ENCODE measurements at regions of chr15 and their contacts with region 1.

Region 1: GRCh38 chr15:45790325-45790943 is 155.6 kb downstream of the SQOR start:
- DNase-seq: peak; percentile 56
- H3K4me3 Mint-ChIP-seq: no peak overlapping the region
- H3K27ac Mint-ChIP-seq: no peak overlapping the region
- H3K4me1 Mint-ChIP-seq: no peaks in the 10 kb centered on the region
- H3K27me3 Mint-ChIP-seq: peaks cover 54% of the 10 kb centered on the region
- CTCF ChIP-seq: peak; percentile 47

Region 2: GRCh38 chr15:45714590-45715488 is 75.6 kb before region 1 on chr15:
- CTCF ChIA-PET with region 1: interaction called, 6 read pairs
- intact Hi-C with region 1: loop called (anchors 1 kb)
- DNase-seq: peak; percentile 67
- H3K4me3 Mint-ChIP-seq: peak overlapping the region; percentile 17
- H3K27ac Mint-ChIP-seq: no peak overlapping the region
- H3K4me1 Mint-ChIP-seq: no peaks in the 10 kb centered on the region
- H3K27me3 Mint-ChIP-seq: peaks cover 34% of the 10 kb centered on the region
- CTCF ChIP-seq: peak; percentile 50

Region 3: DNA sequence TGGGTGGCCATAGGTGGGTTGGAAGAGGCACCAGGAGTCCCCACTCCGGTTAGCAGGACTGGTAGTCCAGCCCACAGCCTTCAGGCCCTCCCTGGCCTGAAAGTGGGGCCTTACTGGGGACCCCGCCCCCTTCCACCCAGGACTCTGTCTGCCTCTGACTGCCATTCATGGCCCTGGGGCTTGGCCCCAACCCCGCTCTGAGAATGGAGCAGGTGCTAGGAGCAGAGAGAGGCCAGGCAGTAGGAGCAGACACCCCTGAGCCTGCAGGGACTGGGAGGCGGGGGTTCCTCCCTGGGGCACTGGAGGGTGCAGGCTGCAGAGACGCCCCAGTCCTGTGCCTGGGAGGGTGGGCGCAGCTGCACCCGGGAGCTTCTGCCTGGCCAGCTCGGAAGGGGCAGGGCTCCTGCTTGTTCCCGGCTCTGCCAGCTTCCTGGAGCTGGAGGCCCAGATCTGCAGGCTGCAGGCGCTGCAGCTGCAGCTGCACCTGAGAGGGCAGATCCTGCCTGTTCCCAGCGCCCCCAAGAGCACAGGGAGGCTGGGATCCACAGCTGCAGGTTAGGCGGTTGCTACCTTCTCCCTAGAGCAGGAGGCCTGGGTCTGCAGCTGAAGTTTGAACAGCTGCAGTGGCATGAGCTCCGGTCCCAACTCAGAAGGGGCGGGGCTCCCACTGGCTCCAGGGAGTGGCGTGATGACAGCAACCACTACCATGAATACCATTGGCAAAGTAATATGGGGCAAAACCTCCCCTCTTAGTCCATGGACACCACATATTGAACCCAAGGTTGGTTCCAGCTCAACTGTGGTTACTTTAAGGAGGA is 39.1 kb after region 1 on chr15:
- CTCF ChIA-PET with region 1: no interaction called
- intact Hi-C with region 1: no loop called
- DNase-seq: no peak
- H3K4me3 Mint-ChIP-seq: no peak overlapping the region
- H3K27ac Mint-ChIP-seq: no peak overlapping the region
- H3K4me1 Mint-ChIP-seq: no peaks in the 10 kb centered on the region
- H3K27me3 Mint-ChIP-seq: peaks cover 30% of the 10 kb centered on the region
- CTCF ChIP-seq: no peak

Region 4: GRCh38 chr15:47688573-47689086 is 1898.2 kb after region 1 on chr15:
- CTCF ChIA-PET with region 1: interaction called, 13 read pairs
- intact Hi-C with region 1: no loop called
- DNase-seq: no peak
- H3K4me3 Mint-ChIP-seq: no peak overlapping the region
- H3K27ac Mint-ChIP-seq: no peak overlapping the region
- H3K4me1 Mint-ChIP-seq: no peaks in the 10 kb centered on the region
- H3K27me3 Mint-ChIP-seq: no peaks in the 10 kb centered on the region
- CTCF ChIP-seq: no peak

Measured in Calu3 (cell line).